MCF 10A (cell line): ENCODE measurements at regions of chr10 and their contacts with region 1.

Region 1: DNA sequence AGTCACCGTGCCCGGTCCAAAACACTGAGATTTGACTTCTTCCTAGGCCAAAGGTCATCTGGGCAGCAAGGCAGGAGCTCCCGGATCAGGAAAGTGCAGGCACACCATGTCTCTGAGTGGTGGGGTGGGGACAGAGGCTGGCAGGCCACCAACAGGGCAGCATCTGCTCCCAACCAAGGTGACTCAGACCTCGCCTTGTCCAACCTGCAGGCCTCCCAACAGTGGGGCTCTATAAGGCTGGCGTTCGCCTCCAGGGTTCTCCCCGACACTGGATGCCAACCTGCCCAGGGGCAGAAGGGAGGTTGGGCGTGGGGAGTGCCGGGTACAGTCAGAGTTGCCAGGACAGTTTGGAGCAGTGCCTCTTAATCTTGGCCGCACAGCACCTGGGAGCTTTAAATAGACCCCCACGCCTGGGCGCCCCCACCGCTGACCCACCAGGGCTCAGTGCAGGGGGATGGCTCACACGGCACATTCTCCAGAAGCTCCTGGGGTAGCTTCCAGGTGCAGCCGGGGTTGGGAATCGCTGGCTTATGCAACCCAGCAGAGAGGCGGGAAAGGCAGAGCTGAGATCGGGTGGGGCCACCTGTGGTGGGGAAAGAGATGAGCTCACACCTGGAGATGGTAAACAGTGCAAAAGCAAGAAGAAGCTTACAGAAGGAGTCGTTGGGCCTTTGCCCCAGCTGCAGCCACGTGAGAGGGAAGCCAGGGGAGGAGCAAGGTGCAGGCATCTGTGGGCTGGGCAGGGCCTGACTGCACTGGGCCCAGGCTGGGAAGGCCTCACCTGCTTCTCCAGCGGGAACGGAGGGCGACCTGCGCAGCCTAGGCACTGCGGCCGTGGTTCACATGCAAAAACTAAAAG is 10.8 kb downstream of the CALML5 start:
- DNase-seq: peak; percentile 93
- H3K4me3 Mint-ChIP-seq: peak overlapping the region; percentile 57
- H3K27ac Mint-ChIP-seq: peak overlapping the region; percentile 94
- H3K4me1 Mint-ChIP-seq: peaks cover 14% of the 10 kb centered on the region
- H3K27me3 Mint-ChIP-seq: no peaks in the 10 kb centered on the region
- CTCF ChIP-seq: no peak

Region 2: DNA sequence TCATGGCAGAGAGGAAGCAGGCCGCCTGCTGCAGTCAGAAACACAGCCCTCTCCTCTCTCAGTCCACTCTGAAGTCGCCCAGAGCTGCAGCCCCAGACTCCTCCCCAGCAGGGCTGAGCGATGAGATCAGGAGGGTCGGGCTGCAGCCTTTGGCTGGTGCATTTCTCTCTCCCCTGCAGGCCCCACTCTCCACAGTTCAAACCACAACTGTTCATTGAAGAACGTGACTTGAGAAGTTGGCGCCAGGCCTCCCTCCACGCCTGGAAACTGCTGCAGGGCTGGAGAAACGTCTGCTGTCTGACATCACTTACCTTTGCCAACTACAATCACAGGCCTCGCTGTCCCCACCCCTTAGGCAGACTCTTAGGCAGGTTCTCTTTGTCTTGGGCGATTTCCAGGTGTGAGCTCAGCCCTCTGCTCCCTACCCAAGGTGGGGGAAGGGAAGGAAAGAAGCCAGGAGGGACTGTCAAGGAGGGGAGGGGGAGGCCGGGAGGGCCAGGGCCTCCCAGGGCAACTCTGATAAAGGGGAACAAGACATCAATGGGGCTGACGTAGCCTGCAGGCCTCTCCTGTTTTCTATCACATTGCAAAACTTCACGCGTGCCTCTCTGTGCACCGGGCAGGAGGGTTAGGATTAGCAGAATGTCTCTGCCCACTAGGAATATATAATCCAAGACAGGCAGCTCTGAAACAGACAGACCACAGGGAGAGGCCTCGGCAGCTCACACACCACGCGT is 22.0 kb before region 1 on chr10:
- CTCF ChIA-PET with region 1: interaction called, 5 read pairs
- POLR2A ChIA-PET with region 1: interaction called, 45 read pairs
- intact Hi-C with region 1: no loop called
- DNase-seq: peak; percentile 91
- H3K4me3 Mint-ChIP-seq: peak overlapping the region; percentile 43
- H3K27ac Mint-ChIP-seq: peak overlapping the region; percentile 78
- H3K4me1 Mint-ChIP-seq: peaks cover 23% of the 10 kb centered on the region
- H3K27me3 Mint-ChIP-seq: no peaks in the 10 kb centered on the region
- CTCF ChIP-seq: no peak

Region 3: GRCh38 chr10:5534880-5535856 is 46.6 kb after region 1 on chr10:
- CTCF ChIA-PET with region 1: interaction called, 3 read pairs
- POLR2A ChIA-PET with region 1: interaction called, 29 read pairs
- intact Hi-C with region 1: no loop called
- DNase-seq: peak; percentile 88
- H3K4me3 Mint-ChIP-seq: peak overlapping the region; percentile 33
- H3K27ac Mint-ChIP-seq: no peak overlapping the region
- H3K4me1 Mint-ChIP-seq: peaks cover 29% of the 10 kb centered on the region
- H3K27me3 Mint-ChIP-seq: no peaks in the 10 kb centered on the region
- CTCF ChIP-seq: no peak

Region 4: DNA sequence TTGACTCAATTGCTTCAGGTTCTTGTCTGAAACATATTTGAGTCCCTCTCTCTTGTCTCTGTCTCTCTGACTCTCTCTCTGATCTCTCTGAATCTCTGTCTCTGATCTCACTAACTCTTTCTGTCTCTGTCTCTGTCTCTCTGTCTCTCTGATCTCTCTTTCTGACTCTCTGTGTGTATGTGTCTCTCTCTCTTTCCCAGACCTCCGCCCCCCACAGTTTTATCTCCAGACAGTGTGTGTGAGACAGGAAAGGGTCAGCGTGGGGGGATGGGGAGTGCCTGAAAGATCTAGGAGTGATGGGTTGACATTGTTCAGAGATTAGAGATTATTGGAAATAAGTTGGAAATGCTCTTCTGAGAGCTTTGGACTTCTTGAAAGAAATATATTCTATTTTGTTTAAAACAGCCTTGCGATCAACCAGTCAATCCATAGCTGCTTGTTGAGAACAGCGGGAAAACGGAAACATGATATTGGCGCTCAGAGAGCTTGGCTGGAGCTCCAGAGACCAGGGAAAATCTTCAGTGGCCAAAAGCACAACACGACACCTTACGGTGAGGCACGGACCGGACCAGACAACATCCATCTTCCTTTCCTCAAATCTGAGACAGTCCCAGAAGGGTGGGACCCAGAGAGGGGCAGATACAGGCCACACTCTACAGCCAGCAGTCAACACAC is 71.7 kb after region 1 on chr10:
- CTCF ChIA-PET with region 1: no interaction called
- POLR2A ChIA-PET with region 1: no interaction called
- intact Hi-C with region 1: no loop called
- DNase-seq: no peak
- H3K4me3 Mint-ChIP-seq: no peak overlapping the region
- H3K27ac Mint-ChIP-seq: peak overlapping the region; percentile 44
- H3K4me1 Mint-ChIP-seq: peaks cover 33% of the 10 kb centered on the region
- H3K27me3 Mint-ChIP-seq: no peaks in the 10 kb centered on the region
- CTCF ChIP-seq: no peak

Region 5: GRCh38 chr10:5583525-5584175 is 95.1 kb after region 1 on chr10:
- CTCF ChIA-PET with region 1: no interaction called
- POLR2A ChIA-PET with region 1: interaction called, 31 read pairs
- intact Hi-C with region 1: no loop called
- DNase-seq: peak; percentile 87
- H3K4me3 Mint-ChIP-seq: peak overlapping the region; percentile 51
- H3K27ac Mint-ChIP-seq: peak overlapping the region; percentile 92
- H3K4me1 Mint-ChIP-seq: peaks cover 30% of the 10 kb centered on the region
- H3K27me3 Mint-ChIP-seq: no peaks in the 10 kb centered on the region
- CTCF ChIP-seq: no peak

Region 6: GRCh38 chr10:5595591-5596590 is 107.4 kb after region 1 on chr10:
- CTCF ChIA-PET with region 1: no interaction called
- POLR2A ChIA-PET with region 1: no interaction called
- intact Hi-C with region 1: no loop called
- DNase-seq: peak; percentile 95
- H3K4me3 Mint-ChIP-seq: peak overlapping the region; percentile 43
- H3K27ac Mint-ChIP-seq: peak overlapping the region; percentile 60
- H3K4me1 Mint-ChIP-seq: peaks cover 25% of the 10 kb centered on the region
- H3K27me3 Mint-ChIP-seq: no peaks in the 10 kb centered on the region
- CTCF ChIP-seq: no peak

Region 7: DNA sequence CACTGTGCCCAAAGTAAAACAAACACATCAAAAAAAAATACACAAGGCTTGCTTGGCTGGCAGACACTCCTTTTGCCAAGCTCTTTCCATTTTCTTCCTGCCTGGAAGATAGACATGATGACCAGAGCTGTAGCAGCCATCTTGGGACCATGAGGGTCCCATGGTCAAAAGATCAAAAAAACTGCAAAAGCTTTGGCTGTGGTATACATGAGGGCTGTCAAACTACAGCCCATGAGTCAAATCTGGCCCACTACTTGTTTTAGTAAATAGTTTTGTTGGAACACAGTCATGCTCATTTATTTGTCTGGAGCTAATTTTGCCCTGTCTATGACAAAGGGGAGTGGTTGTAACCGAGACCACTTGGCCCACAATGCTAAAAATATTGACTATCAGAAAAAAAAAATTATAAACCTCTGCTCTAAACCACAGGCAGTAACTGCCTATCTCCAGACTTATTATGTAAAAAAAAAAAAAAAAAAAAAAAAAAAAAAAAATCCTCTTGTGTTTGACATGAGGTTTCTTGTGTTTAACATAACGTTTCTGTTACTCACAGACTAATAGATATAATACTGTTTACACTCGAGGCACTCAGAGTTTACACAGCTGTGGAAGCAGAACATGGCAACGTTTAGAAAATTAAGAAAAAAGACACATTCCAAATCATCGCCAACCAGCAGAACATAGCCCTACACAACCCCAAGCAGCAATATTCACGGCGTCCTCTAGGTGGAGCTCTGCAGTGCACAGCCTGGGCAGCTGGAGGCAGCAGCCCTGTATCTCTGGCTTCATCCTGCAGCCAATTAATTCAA is 141.0 kb after region 1 on chr10:
- CTCF ChIA-PET with region 1: interaction called, 3 read pairs
- POLR2A ChIA-PET with region 1: interaction called, 10 read pairs
- intact Hi-C with region 1: no loop called
- DNase-seq: peak; percentile 80
- H3K4me3 Mint-ChIP-seq: no peak overlapping the region
- H3K27ac Mint-ChIP-seq: no peak overlapping the region
- H3K4me1 Mint-ChIP-seq: peaks cover 31% of the 10 kb centered on the region
- H3K27me3 Mint-ChIP-seq: no peaks in the 10 kb centered on the region
- CTCF ChIP-seq: peak; percentile 83